ENCODE measurements at regions of chr5 and their contacts with region 1.

Region 1: GRCh38 chr5:176415952-176416924 is at the start of gene CLTB:
- DNase-seq: peak; percentile 78 to 94 (median 88)
- H3K4me3 ChIP-seq: peak within 1 kb of the TSS; percentile 55 to 100 (median 94)
- H3K27ac ChIP-seq: peak within 1 kb of the TSS; percentile 33 to 96 (median 88)
- H3K27me3 ChIP-seq: no peaks in the 10 kb centered on the region
- CTCF ChIP-seq: peak; percentile 27 to 94 (median 74)
- total RNA-seq, gene CLTB: 66.4 to 198 (median 136) TPM

Region 2: GRCh38 chr5:176361437-176362232 is 54.6 kb before region 1 on chr5 and contains the start of gene KIAA1191:
- intact Hi-C with region 1: loop called in 1 of 2 experiments (anchors 2 kb)
- DNase-seq: peak; percentile 90 to 97 (median 95)
- H3K4me3 ChIP-seq: peak within 1 kb of the TSS; percentile 73 to 100 (median 95)
- H3K27ac ChIP-seq: peak within 1 kb of the TSS; percentile 15 to 93 (median 82)
- H3K27me3 ChIP-seq: no peaks in the 10 kb centered on the region
- CTCF ChIP-seq: peak in 52 of 56 donors; percentile 14 to 66 (median 43)
- total RNA-seq, gene KIAA1191: 94.9 to 173 (median 136) TPM

Region 3: DNA sequence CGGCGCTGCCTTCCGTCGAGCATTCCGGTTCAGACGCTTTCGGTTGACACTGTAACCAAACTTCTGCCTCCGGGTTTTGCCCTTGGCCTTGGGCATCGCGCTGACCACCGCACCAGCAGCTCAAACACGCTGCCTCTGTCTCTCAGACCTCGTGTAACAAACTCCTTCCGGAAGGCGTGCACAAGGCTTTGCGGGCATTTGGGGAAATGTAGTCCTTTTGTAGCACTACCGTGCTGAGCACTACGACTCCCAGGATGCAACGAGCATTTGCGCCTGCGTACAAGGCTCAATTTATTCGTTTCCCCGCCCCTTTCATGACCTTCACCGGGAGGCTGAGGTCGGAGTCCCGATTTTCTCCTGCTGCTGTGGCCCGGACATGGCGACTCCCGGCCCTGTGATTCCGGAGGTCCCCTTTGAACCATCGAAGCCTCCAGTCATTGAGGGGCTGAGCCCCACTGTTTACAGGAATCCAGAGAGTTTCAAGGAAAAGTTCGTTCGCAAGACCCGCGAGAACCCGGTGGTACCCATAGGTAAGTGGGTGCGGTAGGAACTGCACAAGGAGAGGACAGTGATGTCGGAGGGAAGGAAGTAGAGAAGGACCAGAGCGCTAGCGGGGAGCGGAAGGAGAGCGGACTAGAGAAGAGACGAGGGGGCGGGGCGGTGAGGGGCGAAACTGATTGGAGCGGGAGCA is 27.6 kb before region 1 on chr5 and contains the starts of genes HIGD2A and NOP16:
- intact Hi-C with region 1: loop called in 1 of 2 experiments (anchors 1 kb)
- DNase-seq: peak; percentile 93 to 99 (median 98)
- H3K4me3 ChIP-seq: peak within 1 kb of the TSS; percentile 61 to 99 (median 88)
- H3K27ac ChIP-seq: peak within 1 kb of the TSS; percentile 76 to 99 (median 96)
- H3K27me3 ChIP-seq: no peaks in the 10 kb centered on the region
- CTCF ChIP-seq: peak in 23 of 56 donors; percentile 2 to 43 (median 22)
- total RNA-seq, gene HIGD2A: 58.3 to 114 (median 80.1) TPM
- total RNA-seq, gene NOP16: 7.6 to 21.5 (median 13.1) TPM

Region 4: DNA sequence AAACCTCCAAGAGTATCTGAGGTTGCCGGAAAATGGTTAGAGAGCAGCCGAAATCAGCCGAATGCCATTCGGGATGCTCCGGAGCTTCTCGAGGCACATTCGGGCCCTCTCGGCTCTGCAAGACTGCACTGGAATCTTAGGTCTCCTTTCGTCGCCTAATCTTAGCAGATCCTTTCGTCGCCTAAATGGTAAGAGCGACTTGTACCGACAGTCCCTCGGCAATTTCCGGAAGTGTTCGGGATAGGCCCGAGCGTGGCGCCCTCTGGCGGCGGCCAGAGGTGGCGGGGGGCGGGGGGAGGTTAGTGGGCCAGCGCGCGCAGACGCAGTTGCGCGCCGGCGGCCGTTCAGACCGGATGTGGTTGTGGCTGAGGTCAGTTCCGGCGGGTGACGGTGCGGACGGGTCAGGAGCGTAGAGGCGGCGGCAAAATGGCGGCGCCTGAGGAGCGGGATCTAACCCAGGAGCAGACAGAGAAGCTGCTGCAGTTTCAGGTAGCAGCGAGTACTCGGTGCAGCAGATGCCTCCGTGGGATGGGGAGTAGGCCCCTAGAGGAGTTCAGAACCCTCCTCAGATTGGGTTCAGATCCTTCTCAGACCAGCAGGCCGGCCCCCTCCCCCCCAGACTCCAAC is 31.9 kb after region 1 on chr5 and contains the start of gene FAF2:
- intact Hi-C with region 1: loop called (anchors 1 kb)
- DNase-seq: peak; percentile 90 to 96 (median 94)
- H3K4me3 ChIP-seq: peak within 1 kb of the TSS; percentile 62 to 99 (median 93)
- H3K27ac ChIP-seq: peak within 1 kb of the TSS; percentile 68 to 98 (median 95)
- H3K27me3 ChIP-seq: no peaks in the 10 kb centered on the region
- CTCF ChIP-seq: peak; percentile 78 to 100 (median 97)
- total RNA-seq, gene FAF2: 23.5 to 42.0 (median 33.9) TPM

Region 5: GRCh38 chr5:176458904-176459561 is 42.8 kb after region 1 on chr5:
- intact Hi-C with region 1: no loop called
- DNase-seq: no peak
- H3K4me3 ChIP-seq: no peak overlapping the region
- H3K27ac ChIP-seq: no peak overlapping the region
- H3K27me3 ChIP-seq: no peaks in the 10 kb centered on the region
- CTCF ChIP-seq: no peak

Region 6: DNA sequence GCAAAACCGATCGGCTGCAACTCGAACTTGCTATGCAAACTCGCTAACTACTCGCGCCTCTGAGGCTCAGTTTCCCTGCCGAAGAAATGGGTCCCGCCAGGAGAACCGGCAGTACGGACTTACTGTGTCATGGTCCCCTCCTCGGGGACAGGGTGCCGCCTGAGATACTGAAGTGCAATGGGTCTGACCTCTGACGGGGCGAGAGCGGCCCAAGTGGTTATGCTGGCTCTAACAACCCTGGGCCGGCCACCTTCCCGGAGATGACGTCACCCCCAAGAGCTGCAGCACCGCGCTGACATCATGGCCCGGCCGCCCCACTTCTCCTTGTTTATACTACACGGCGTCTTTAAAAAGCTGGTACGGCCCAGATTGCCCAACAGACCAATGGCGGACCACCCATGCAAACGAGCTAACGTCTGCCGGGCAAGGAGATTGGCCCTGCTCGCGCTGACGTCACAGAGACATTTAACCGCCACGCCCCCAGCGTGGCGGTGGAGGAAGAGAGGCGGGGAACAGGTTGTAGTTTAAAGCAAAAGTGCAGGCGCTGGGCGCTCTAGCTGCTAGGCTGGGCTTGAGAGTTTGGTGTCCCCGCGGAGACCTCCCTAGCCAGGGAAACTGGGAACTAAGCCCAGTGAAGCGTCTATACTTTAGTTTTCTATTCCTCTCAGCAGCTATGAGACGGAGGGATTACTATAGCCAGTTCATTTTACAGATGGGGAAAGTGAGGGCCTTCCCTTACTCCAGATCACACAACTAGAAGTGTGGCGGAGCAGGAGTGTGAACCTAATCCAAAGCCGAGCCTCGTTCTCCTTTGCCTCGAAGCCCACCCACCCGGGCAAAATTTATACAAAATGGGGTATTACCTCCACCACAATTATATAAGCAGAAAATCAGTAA is 121.6 kb after region 1 on chr5:
- intact Hi-C with region 1: loop called (anchors 1 to 2 kb)
- DNase-seq: peak; percentile 98 to 100 (median 100)
- H3K4me3 ChIP-seq: peak overlapping the region; percentile 72 to 100 (median 92)
- H3K27ac ChIP-seq: peak overlapping the region; percentile 74 to 100 (median 98)
- H3K27me3 ChIP-seq: no peaks in the 10 kb centered on the region
- CTCF ChIP-seq: peak in 10 of 56 donors; percentile 12 to 38 (median 14)

Region 7: GRCh38 chr5:176543428-176544173 is 127.4 kb after region 1 on chr5:
- intact Hi-C with region 1: loop called (anchors 1 to 2 kb)
- DNase-seq: peak in 7 of 10 donors; percentile 53 to 81 (median 61)
- H3K4me3 ChIP-seq: peak overlapping the region; percentile 54 to 85 (median 75)
- H3K27ac ChIP-seq: peak overlapping the region in 58 of 59 donors; percentile 20 to 93 (median 80)
- H3K27me3 ChIP-seq: no peaks in the 10 kb centered on the region
- CTCF ChIP-seq: no peak

Region 8: GRCh38 chr5:176647030-176647866 is 231.0 kb after region 1 on chr5 and contains the start of gene TSPAN17:
- intact Hi-C with region 1: loop called (anchors 5 to 10 kb)
- DNase-seq: peak; percentile 99 to 100 (median 100)
- H3K4me3 ChIP-seq: peak within 1 kb of the TSS; percentile 66 to 91 (median 80)
- H3K27ac ChIP-seq: peak within 1 kb of the TSS in 55 of 59 donors; percentile 39 to 90 (median 80)
- H3K27me3 ChIP-seq: no peaks in the 10 kb centered on the region
- CTCF ChIP-seq: peak in 54 of 56 donors; percentile 18 to 71 (median 47)
- total RNA-seq, gene TSPAN17: 13.7 to 59.5 (median 32.9) TPM

Region 9: DNA sequence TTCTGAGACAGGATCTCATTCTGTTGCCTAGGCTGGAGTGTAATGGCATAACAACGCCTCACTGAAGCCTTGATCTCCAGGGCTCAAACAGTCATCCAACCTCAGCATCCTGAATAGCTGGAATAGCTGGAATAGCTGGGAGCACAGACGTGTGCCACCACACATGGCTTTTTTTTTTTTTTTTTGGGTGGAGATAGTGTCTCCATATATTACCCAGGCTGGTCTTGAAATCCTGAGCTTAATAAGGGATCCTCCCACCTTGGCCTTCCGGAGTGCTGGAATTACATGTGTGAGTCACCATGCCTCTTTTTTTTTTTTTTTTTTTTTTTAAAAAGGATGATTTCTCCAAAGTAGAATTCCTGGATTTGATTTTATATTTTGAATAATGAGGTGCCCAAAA is 778.0 kb after region 1 on chr5:
- intact Hi-C with region 1: no loop called
- DNase-seq: no peak
- H3K4me3 ChIP-seq: no peak overlapping the region
- H3K27ac ChIP-seq: no peak overlapping the region
- H3K27me3 ChIP-seq: no peaks in the 10 kb centered on the region
- CTCF ChIP-seq: no peak